Psoas muscle (tissue), 8 donors: ENCODE measurements at regions of chr14 and their contacts with region 1.

Region 1: DNA sequence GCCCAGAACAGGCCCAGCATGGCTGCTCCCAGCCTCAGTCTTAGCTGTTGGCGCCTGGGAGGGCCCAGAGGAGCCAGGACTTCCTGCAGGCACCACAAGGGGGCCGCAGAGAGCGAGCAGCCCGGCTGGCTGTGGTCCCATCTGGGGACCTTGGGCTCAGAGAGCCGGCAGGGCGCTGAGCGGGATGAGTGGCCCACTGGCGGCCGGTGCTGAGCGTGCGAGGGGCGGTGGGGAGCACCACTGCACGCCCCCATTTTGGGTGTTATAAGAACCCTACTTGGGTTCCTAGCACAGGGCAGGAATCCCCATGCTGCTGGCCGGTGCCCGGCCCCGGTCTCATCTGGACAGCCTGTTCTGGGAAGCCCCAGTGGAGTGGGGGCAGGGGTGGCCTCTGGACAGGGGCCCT is 25.9 kb upstream of the CRIP2 start:
- DNase-seq: peak; percentile 76 to 88
- ATAC-seq: peak; percentile 83 to 94 (median 88)
- H3K4me3 ChIP-seq: peak overlapping the region; percentile 2
- H3K27ac ChIP-seq: no peak overlapping the region
- H3K4me1 ChIP-seq: peaks cover 6% of the 10 kb centered on the region
- H3K27me3 ChIP-seq: no peaks in the 10 kb centered on the region
- CTCF ChIP-seq: peak; percentile 94

Region 2: GRCh38 chr14:105358140-105358846 is 90.4 kb before region 1 on chr14:
- intact Hi-C with region 1: no loop called
- DNase-seq: no peak
- ATAC-seq: peak in 2 of 4 donors; percentile 15 to 26
- H3K4me3 ChIP-seq: no peak overlapping the region
- H3K27ac ChIP-seq: no peak overlapping the region
- H3K4me1 ChIP-seq: no peaks in the 10 kb centered on the region
- H3K27me3 ChIP-seq: no peaks in the 10 kb centered on the region
- CTCF ChIP-seq: no peak

Region 3: DNA sequence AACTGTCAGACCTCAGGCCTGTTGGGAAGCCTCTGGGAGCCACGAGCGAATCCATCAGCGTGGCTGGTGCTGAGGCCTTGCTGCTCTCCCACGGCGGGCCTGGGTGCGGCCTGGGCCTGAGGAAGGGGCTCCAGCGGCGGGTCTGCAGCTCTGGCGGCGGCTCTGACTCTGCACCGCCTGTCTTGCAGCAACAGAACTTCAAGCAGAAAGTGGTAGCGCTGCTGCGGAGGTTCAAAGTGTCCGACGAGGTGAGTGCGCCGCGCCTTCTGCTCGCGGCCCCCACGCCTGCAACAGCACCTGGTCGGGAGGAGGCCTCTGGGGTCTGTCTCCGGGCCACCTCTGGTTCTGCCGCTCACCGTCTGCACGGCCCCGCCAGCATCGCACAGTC is 79.1 kb before region 1 on chr14:
- intact Hi-C with region 1: loop called (anchors 2 to 5 kb)
- DNase-seq: no peak
- ATAC-seq: no peak
- H3K4me3 ChIP-seq: no peak overlapping the region
- H3K27ac ChIP-seq: no peak overlapping the region
- H3K4me1 ChIP-seq: no peaks in the 10 kb centered on the region
- H3K27me3 ChIP-seq: no peaks in the 10 kb centered on the region
- CTCF ChIP-seq: no peak

Region 4: GRCh38 chr14:105375635-105376057 is 73.1 kb before region 1 on chr14:
- intact Hi-C with region 1: loop called (anchors 2 to 5 kb)
- DNase-seq: no peak
- ATAC-seq: no peak
- H3K4me3 ChIP-seq: no peak overlapping the region
- H3K27ac ChIP-seq: no peak overlapping the region
- H3K4me1 ChIP-seq: no peaks in the 10 kb centered on the region
- H3K27me3 ChIP-seq: no peaks in the 10 kb centered on the region
- CTCF ChIP-seq: no peak

Region 5: GRCh38 chr14:105527661-105528581 is 79.2 kb after region 1 on chr14:
- intact Hi-C with region 1: loop called in 1 of 2 experiments (anchors 10 kb)
- DNase-seq: peak; percentile 82 to 88
- ATAC-seq: peak; percentile 80 to 95 (median 89)
- H3K4me3 ChIP-seq: peak overlapping the region; percentile 77
- H3K27ac ChIP-seq: no peak overlapping the region
- H3K4me1 ChIP-seq: peaks cover 17% of the 10 kb centered on the region
- H3K27me3 ChIP-seq: peaks cover 0 to 46% (median 12%) of the 10 kb centered on the region in 3 donors
- CTCF ChIP-seq: peak; percentile 90